Caco-2 (cell line): ENCODE measurements at regions of chr20 and their contacts with region 1.

Region 1: DNA sequence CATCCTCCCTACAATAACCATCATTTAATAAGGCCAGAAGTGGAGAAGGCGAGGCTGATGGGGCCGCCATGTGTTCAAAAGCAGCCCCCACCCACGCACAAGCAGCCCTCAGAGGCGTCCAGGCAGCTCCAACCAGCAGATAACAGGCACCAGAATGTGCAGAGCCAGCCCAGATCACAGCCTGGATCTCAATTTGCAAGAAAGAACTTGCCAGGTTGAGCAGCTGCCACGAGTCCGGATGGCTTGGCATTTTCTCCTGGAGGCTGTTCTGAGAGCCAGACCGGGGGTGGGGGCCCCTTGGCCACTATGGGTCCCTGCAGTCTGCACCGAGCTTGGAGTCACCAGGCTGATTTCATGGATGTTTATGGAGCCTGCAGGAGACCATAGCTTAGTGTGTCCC is 338.1 kb downstream of the PREX1 start:
- DNase-seq: no peak
- H3K4me3 ChIP-seq: no peak overlapping the region
- H3K4me3 Mint-ChIP-seq: no peak overlapping the region
- H3K27ac Mint-ChIP-seq: no peak overlapping the region
- H3K4me1 ChIP-seq: peaks cover 29% of the 10 kb centered on the region
- H3K4me1 Mint-ChIP-seq: peaks cover 27% of the 10 kb centered on the region
- H3K27me3 ChIP-seq: no peaks in the 10 kb centered on the region
- H3K27me3 Mint-ChIP-seq: no peaks in the 10 kb centered on the region
- CTCF ChIP-seq: no peak

Region 2: GRCh38 chr20:48431653-48432516 is 57.8 kb before region 1 on chr20:
- CTCF ChIA-PET with region 1: no interaction called
- POLR2A ChIA-PET with region 1: no interaction called
- intact Hi-C with region 1: no loop called
- DNase-seq: peak in 1 of 2 experiments; percentile 23
- H3K4me3 ChIP-seq: no peak overlapping the region
- H3K4me3 Mint-ChIP-seq: no peak overlapping the region
- H3K27ac Mint-ChIP-seq: no peak overlapping the region
- H3K4me1 ChIP-seq: peaks cover 5% of the 10 kb centered on the region; the same call in 1 of the 2 replicates
- H3K4me1 Mint-ChIP-seq: no peaks in the 10 kb centered on the region
- H3K27me3 ChIP-seq: no peaks in the 10 kb centered on the region
- H3K27me3 Mint-ChIP-seq: no peaks in the 10 kb centered on the region
- CTCF ChIP-seq: no peak

Region 3: GRCh38 chr20:48523212-48523941 is 33.7 kb after region 1 on chr20:
- CTCF ChIA-PET with region 1: no interaction called
- POLR2A ChIA-PET with region 1: no interaction called
- intact Hi-C with region 1: loop called (anchors 5 kb)
- DNase-seq: peak; percentile 89 to 93
- H3K4me3 ChIP-seq: no peak overlapping the region
- H3K4me3 Mint-ChIP-seq: no peak overlapping the region
- H3K27ac Mint-ChIP-seq: no peak overlapping the region
- H3K4me1 ChIP-seq: no peaks in the 10 kb centered on the region
- H3K4me1 Mint-ChIP-seq: no peaks in the 10 kb centered on the region
- H3K27me3 ChIP-seq: no peaks in the 10 kb centered on the region
- H3K27me3 Mint-ChIP-seq: no peaks in the 10 kb centered on the region
- CTCF ChIP-seq: no peak

Region 4: GRCh38 chr20:48556956-48557355 is 67.3 kb after region 1 on chr20:
- CTCF ChIA-PET with region 1: no interaction called
- POLR2A ChIA-PET with region 1: no interaction called
- intact Hi-C with region 1: no loop called
- DNase-seq: no peak
- H3K4me3 ChIP-seq: no peak overlapping the region
- H3K4me3 Mint-ChIP-seq: no peak overlapping the region
- H3K27ac Mint-ChIP-seq: no peak overlapping the region
- H3K4me1 ChIP-seq: peaks cover 7% of the 10 kb centered on the region; the same call in 1 of the 2 replicates
- H3K4me1 Mint-ChIP-seq: peaks cover 5% of the 10 kb centered on the region
- H3K27me3 ChIP-seq: no peaks in the 10 kb centered on the region
- H3K27me3 Mint-ChIP-seq: no peaks in the 10 kb centered on the region
- CTCF ChIP-seq: no peak

Region 5: GRCh38 chr20:48578521-48579001 is 88.9 kb after region 1 on chr20:
- CTCF ChIA-PET with region 1: no interaction called
- POLR2A ChIA-PET with region 1: no interaction called
- intact Hi-C with region 1: loop called (anchors 5 kb)
- DNase-seq: peak in 1 of 2 experiments; percentile 45
- H3K4me3 ChIP-seq: no peak overlapping the region
- H3K4me3 Mint-ChIP-seq: no peak overlapping the region
- H3K27ac Mint-ChIP-seq: no peak overlapping the region
- H3K4me1 ChIP-seq: no peaks in the 10 kb centered on the region; the same call in 1 of the 2 replicates
- H3K4me1 Mint-ChIP-seq: no peaks in the 10 kb centered on the region
- H3K27me3 ChIP-seq: no peaks in the 10 kb centered on the region
- H3K27me3 Mint-ChIP-seq: no peaks in the 10 kb centered on the region
- CTCF ChIP-seq: peak; percentile 10 to 41